ENCODE measurements at regions of chr7 and their contacts with region 1.

Region 1: DNA sequence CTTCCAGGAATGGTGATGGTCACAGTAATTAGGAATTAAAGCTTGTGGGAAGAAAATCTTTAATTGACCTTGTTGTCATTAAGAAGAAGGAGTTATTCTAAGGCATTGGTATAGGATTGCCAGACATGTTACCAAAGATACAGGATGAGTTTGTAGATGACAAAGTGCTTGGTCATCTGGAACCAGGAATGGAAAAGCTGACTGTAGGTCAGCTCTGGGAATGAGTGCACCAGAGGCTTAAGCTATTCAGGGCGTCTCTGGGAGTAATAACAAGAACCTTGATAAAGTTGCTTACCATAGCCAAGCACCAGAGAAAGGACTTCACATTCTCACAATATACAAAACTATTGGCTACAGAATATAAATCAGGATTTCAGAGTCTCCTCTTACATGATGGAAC is 89.0 kb downstream of the PHTF2 start:
- DNase-seq: no peak
- ATAC-seq: no peak
- H3K4me3 ChIP-seq: no peak overlapping the region
- H3K4me3 Mint-ChIP-seq: no peak overlapping the region
- H3K27ac ChIP-seq: no peak overlapping the region
- H3K27ac Mint-ChIP-seq: peak overlapping the region in 1 of 2 donors; percentile 12
- H3K4me1 ChIP-seq: no peaks in the 10 kb centered on the region
- H3K4me1 Mint-ChIP-seq: peaks cover 16 to 31% (median 29%) of the 10 kb centered on the region in 3 donors
- H3K27me3 ChIP-seq: no peaks in the 10 kb centered on the region
- H3K27me3 Mint-ChIP-seq: no peaks in the 10 kb centered on the region

Region 2: DNA sequence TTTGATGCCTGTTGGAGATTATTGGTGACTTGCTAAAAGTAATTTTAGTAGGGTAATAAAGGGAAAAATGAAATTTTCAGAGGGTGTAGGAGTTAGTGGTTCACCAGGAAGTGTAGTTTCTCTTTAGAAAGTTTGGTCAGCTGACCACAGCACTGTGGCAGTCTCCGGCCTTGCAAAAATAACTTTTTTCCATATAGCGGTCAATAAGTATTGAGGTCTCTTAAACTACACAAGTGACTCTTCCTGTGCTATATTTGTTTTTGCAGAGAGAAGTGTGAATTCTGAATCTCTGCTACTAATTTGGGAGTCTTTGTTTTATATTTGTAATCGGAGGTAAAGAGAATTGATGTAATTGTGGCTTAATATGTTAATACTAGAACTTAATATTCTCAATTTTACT is 326.2 kb before region 1 on chr7:
- CTCF ChIA-PET with region 1: no interaction called
- POLR2A ChIA-PET with region 1: no interaction called
- DNase-seq: no peak
- ATAC-seq: no peak
- H3K4me3 ChIP-seq: no peak overlapping the region
- H3K4me3 Mint-ChIP-seq: no peak overlapping the region
- H3K27ac ChIP-seq: no peak overlapping the region
- H3K27ac Mint-ChIP-seq: no peak overlapping the region
- H3K4me1 ChIP-seq: peaks cover 0 to 1% of the 10 kb centered on the region in 2 experiments
- H3K4me1 Mint-ChIP-seq: peaks cover 0 to 30% (median 13%) of the 10 kb centered on the region in 3 donors
- H3K27me3 ChIP-seq: no peaks in the 10 kb centered on the region
- H3K27me3 Mint-ChIP-seq: no peaks in the 10 kb centered on the region

Region 3: GRCh38 chr7:77923419-77923818 is 35.9 kb after region 1 on chr7:
- CTCF ChIA-PET with region 1: interaction called in 1 of 2 experiments, 5 read pairs
- POLR2A ChIA-PET with region 1: interaction called in 1 of 2 experiments, 10 read pairs
- DNase-seq: no peak
- ATAC-seq: no peak
- H3K4me3 ChIP-seq: no peak overlapping the region
- H3K4me3 Mint-ChIP-seq: no peak overlapping the region
- H3K27ac ChIP-seq: no peak overlapping the region
- H3K27ac Mint-ChIP-seq: no peak overlapping the region
- H3K4me1 ChIP-seq: no peaks in the 10 kb centered on the region
- H3K4me1 Mint-ChIP-seq: peaks cover 7 to 13% (median 12%) of the 10 kb centered on the region in 3 donors
- H3K27me3 ChIP-seq: no peaks in the 10 kb centered on the region
- H3K27me3 Mint-ChIP-seq: no peaks in the 10 kb centered on the region

Measured in T-cell (primary cell).